ENCODE measurements at regions of chr11 and their contacts with region 1.

Region 1: DNA sequence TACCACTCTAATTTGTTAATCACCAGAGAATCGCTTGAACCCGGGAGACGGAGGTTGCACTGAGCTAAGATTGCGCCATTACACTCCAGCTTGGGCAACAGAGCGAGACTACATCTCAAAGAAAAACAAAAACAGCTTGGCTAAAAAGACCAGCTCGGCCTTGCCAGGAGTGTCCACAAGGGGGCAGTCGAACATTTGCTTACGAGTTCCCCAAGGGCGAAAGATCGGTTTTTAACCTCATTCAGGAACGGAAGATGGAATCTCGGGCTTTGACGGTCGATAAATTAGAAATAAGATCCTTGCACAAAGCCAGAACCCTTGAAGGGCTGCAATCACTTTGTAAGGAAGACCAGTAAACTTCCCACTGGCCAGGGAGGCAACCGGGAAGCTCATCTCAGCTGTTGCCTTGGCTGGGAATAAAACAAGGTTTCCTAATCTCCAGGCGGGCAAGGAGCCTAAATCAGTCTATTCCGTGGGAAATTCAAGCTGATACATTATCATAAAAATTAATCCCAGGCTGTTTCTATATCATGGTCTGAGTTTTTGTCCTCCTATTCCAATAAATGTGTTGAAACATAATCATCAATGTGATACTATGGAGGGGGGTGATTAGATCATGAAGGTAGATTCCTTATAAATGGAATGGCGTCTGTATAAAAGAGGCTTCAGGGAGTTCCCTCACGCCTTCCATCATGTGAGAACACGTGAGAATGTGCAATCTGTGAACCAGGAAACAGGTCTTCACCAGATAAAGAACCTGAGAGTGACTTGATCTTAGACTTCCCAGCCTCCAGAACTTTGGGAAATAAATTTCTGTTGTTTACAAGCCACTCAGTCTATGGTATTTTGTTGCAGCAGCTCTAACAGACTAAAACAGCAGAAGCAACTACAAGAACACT is 14.9 kb upstream of the SLC29A2 start:
- DNase-seq: peak; percentile 84
- H3K4me3 ChIP-seq: peak overlapping the region; percentile 64
- H3K27ac ChIP-seq: no peak overlapping the region
- H3K4me1 ChIP-seq: no peaks in the 10 kb centered on the region
- H3K27me3 ChIP-seq: no peaks in the 10 kb centered on the region; the same call in 1 of the 2 replicates

Region 2: GRCh38 chr11:66302656-66303055 is 83.8 kb before region 1 on chr11:
- in situ Hi-C with region 1: loop called (anchors 10 kb)
- DNase-seq: no peak
- H3K4me3 ChIP-seq: no peak overlapping the region
- H3K27ac ChIP-seq: no peak overlapping the region
- H3K4me1 ChIP-seq: no peaks in the 10 kb centered on the region
- H3K27me3 ChIP-seq: no peaks in the 10 kb centered on the region

Region 3: GRCh38 chr11:66438504-66439466 is 52.4 kb after region 1 on chr11 and contains the start of gene MRPL11:
- in situ Hi-C with region 1: no loop called
- DNase-seq: peak; percentile 96
- H3K4me3 ChIP-seq: peak within 1 kb of the TSS; percentile 78
- H3K27ac ChIP-seq: peak within 1 kb of the TSS; percentile 25
- H3K4me1 ChIP-seq: peaks cover 8% of the 10 kb centered on the region
- H3K27me3 ChIP-seq: no peaks in the 10 kb centered on the region
- total RNA-seq, gene MRPL11: 36.7 and 53.5 TPM in 2 replicates

Region 4: DNA sequence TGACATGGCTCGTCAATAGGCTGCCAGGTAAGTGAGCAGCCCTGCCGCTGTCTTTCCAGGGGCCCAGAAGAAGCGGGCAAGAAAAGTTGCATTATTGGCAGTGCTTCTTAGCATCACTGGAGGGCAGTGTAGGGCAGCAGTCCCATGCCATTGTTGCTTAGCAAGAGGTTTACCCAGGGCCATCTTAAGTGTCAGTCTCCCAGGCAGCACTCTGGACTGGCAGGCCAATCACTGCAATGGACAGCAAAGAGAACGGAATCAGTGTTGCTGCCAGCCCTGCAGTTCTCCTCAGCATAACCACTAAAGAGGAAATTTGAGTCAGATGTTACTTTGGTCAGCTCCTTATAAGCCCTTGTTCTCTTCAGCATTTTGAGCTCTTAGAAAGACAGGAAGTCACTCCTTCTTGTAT is 866.4 kb after region 1 on chr11:
- in situ Hi-C with region 1: no loop called
- DNase-seq: peak; percentile 65
- H3K4me3 ChIP-seq: no peak overlapping the region
- H3K27ac ChIP-seq: no peak overlapping the region
- H3K4me1 ChIP-seq: peaks cover 12% of the 10 kb centered on the region
- H3K27me3 ChIP-seq: no peaks in the 10 kb centered on the region